Pancreas (tissue), 10 donors: ENCODE measurements at regions of chr5 and their contacts with region 1.

Region 1: GRCh38 chr5:168114444-168115017 is 176.9 kb upstream of the WWC1 start:
- DNase-seq: peak; percentile 38 to 81 (median 64)
- ATAC-seq: peak; percentile 74 to 99 (median 93)
- H3K4me3 ChIP-seq: no peak overlapping the region
- H3K27ac ChIP-seq: no peak overlapping the region
- H3K4me1 ChIP-seq: no peaks in the 10 kb centered on the region
- H3K27me3 ChIP-seq: no peaks in the 10 kb centered on the region
- CTCF ChIP-seq: peak; percentile 43 to 56 (median 52)

Region 2: DNA sequence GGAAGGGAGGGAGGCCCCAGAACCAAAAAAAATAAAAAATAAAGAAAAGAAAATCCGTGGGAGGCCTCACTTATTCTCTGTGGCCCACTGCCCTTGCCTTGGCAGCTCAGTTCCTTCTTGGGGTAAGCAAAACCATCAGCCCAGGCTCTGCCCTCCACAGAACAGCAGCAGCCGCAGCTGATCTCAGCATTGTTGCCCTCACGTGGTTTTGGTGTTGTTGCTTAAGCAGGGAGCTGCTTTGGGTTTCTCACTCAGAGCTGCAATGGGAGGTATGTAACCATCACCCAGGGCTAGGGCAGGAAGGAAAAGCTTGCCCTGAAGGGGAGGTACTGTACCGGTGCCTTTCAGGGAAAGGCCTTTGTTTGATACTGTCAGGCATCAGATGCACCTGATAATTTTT is 197.8 kb before region 1 on chr5:
- intact Hi-C with region 1: no loop called
- DNase-seq: peak in 1 of 6 donors; percentile 30
- ATAC-seq: peak in 3 of 4 donors; percentile 19 to 73 (median 70)
- H3K4me3 ChIP-seq: no peak overlapping the region
- H3K27ac ChIP-seq: peak overlapping the region in 1 of 4 donors; percentile 33
- H3K4me1 ChIP-seq: no peaks in the 10 kb centered on the region
- H3K27me3 ChIP-seq: no peaks in the 10 kb centered on the region
- CTCF ChIP-seq: no peak

Region 3: GRCh38 chr5:168219515-168220410 is 105.2 kb after region 1 on chr5:
- intact Hi-C with region 1: loop called in 2 of 3 experiments (anchors 5 to 10 kb)
- DNase-seq: peak in 3 of 6 donors; percentile 27 to 69 (median 37)
- ATAC-seq: peak; percentile 84 to 99 (median 92)
- H3K4me3 ChIP-seq: no peak overlapping the region
- H3K27ac ChIP-seq: no peak overlapping the region
- H3K4me1 ChIP-seq: no peaks in the 10 kb centered on the region
- H3K27me3 ChIP-seq: no peaks in the 10 kb centered on the region
- CTCF ChIP-seq: peak; percentile 65 to 83 (median 82)